ENCODE measurements at regions of chr1 and their contacts with region 1.

Region 1: DNA sequence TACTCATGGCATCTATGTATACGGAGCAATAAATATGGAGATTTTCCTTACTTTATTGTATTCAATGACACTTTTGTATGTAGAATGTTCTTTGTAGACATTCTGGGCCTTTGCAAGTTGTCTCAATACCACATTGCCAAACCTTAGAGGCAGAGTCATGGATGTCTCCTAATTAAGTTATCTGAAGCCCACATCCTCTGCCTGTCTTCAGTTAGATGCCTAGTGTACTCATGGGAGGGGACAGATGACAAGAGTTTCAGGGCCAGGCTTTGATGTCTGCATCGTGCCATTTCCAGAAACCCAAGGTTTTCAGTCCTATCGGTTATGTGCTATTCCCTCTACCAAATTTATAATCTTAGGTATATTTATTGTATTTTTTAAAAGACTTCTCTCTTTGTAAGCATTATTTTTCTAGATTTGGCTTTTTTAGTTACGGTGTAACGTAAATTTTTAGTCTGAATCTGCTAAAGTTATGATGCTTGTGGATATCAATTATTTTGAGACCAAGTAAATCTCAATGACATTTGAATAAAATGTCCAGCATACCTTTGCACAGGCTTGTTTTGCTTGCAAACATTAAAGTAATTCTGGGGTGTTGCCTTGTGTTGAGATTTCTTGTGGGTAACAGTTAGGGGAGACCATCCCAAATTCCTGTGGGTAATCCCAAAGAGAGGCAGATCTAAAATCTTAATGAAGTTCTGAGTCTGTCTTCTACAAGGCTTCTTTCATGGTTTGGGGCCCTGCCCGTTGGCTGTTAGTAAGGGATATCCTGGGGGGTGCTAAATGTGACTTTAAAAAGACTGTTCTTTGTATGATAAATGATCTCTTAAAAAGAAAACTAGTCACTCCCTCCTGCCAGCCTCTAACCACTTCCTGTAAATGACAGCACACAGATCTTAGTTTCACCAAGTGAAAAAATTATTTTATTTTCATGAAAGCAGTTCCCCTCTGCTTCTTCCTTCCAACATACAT is 8.0 kb upstream of the MACF1 start:
- DNase-seq: peak; percentile 79
- H3K4me3 Mint-ChIP-seq: peak overlapping the region; percentile 65
- H3K27ac Mint-ChIP-seq: peak overlapping the region; percentile 98
- H3K4me1 Mint-ChIP-seq: peaks cover 82% of the 10 kb centered on the region
- H3K27me3 Mint-ChIP-seq: no peaks in the 10 kb centered on the region

Region 2: DNA sequence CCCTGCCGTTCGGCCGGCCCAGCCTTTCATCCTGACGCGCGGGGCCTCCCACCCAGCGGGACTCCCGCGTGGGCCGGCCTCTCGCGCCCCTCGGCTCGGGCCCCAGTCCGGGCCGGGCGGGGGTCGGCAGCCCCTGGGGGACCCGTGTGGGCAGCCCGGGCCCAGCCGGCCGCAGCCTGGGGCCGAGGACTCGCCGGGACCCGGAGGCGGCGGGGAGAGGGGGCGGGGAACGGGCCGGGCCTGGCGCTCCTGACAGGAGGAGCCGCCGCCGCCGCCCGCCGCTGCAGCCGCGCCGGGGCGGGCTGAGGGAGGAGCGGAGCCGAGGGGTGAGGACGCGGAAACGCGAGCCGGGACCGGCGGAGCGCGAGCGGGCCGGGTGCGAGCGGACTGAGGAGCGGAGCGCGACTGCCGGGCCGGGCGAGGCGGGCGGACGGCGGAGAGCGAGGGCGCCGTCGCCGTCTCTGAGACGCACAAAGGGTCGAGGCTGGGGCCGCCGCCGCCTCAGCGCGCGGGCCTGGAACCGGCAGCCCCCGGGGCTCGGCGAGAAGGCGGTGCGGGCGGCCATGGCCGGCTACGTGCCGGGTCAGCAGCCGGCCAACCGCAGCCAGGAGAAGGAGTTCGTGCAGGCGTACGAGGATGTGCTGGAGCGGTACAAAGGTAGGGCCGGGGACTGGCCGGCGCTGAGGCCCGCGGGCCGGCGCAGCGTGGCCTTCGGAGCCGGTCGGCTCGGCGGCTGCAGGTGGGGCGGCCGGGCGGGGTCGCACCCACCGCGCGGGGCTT is 91.3 kb before region 1 on chr1:
- CTCF ChIA-PET with region 1: interaction called, 149 read pairs
- DNase-seq: peak; percentile 77
- H3K4me3 Mint-ChIP-seq: peak overlapping the region; percentile 71
- H3K27ac Mint-ChIP-seq: no peak overlapping the region
- H3K4me1 Mint-ChIP-seq: peaks cover 33% of the 10 kb centered on the region
- H3K27me3 Mint-ChIP-seq: peaks cover 32% of the 10 kb centered on the region

Region 3: DNA sequence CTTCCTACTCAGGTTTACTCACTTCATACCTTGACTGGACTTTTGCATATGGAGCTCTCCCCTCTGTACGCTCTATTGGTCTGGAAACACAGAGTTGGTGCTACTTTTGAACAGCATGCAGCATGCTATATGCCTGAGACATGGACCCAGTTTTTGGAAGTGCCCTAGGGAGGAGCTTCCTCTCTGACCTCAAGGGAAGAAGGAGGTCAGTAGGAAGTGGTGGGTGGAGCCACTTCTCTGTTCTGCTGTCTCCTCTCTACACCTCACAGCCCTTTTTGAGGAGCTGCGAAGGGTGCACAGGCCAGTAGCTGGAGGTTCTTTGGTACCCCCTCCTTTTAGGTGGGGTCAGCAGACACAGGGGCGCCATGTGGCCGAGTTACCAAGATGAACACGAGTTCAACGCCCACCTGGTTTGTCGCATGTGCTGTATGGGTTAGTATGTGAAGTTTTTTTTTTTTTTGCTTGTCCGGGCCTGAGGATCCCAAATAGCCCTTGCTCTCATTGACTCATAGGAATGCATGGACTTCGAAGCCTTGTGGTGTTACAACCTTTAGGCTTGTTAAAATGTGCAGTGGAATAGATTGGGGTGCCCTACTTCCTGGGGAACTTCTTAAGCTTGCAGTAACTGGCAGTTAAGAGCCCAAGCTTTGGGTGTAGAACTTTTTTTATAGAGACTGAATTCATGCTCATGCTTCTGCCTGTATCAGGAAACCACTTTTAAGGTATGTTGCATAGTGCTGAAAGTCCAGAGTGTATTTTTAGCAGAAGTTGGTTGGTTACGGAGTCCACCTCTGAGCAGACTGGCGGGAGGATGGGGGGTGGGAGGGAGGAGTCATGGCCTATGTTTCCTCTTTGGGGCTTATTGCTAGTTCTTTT is 18.7 kb after region 1 on chr1:
- CTCF ChIA-PET with region 1: interaction called, 140 read pairs
- DNase-seq: peak; percentile 64
- H3K4me3 Mint-ChIP-seq: peak overlapping the region; percentile 77
- H3K27ac Mint-ChIP-seq: peak overlapping the region; percentile 84
- H3K4me1 Mint-ChIP-seq: peaks cover 58% of the 10 kb centered on the region
- H3K27me3 Mint-ChIP-seq: no peaks in the 10 kb centered on the region

Region 4: DNA sequence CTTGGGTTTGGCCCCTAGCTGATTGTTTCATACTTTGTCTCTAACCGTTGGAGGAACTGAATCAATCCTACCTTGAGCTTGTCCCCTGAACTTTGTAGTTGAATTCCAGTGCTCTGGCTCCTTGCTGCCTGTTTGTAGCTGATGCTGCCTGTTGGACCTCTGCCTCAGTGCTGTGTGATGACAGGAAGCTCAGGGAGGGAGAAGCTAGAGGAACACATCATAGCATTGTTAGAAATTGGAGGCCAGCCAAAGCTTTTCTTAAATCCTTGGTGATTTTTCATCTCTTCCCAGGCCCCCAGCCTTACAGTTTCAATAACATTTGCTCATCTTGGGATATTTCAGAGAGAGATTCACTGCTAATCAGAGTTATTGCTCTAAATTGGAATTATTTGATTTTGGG is 41.9 kb after region 1 on chr1:
- CTCF ChIA-PET with region 1: interaction called, 29 read pairs
- DNase-seq: no peak
- H3K4me3 Mint-ChIP-seq: no peak overlapping the region
- H3K27ac Mint-ChIP-seq: peak overlapping the region; percentile 24
- H3K4me1 Mint-ChIP-seq: peaks cover 33% of the 10 kb centered on the region
- H3K27me3 Mint-ChIP-seq: no peaks in the 10 kb centered on the region

Region 5: GRCh38 chr1:39268112-39268581 is 71.6 kb after region 1 on chr1:
- CTCF ChIA-PET with region 1: interaction called, 13 read pairs
- DNase-seq: no peak
- H3K4me3 Mint-ChIP-seq: peak overlapping the region; percentile 19
- H3K27ac Mint-ChIP-seq: peak overlapping the region; percentile 8
- H3K4me1 Mint-ChIP-seq: peaks cover 58% of the 10 kb centered on the region
- H3K27me3 Mint-ChIP-seq: no peaks in the 10 kb centered on the region

Measured in activated naive CD4-positive, alpha-beta T cell treated with anti-CD3 and anti-CD28 coated beads, Interleukin-2, amount 10 ng/mL, durations not matched to agents 7 days and 5 days (primary cell).